ENCODE measurements at regions of chr18 and their contacts with region 1.

Region 1: DNA sequence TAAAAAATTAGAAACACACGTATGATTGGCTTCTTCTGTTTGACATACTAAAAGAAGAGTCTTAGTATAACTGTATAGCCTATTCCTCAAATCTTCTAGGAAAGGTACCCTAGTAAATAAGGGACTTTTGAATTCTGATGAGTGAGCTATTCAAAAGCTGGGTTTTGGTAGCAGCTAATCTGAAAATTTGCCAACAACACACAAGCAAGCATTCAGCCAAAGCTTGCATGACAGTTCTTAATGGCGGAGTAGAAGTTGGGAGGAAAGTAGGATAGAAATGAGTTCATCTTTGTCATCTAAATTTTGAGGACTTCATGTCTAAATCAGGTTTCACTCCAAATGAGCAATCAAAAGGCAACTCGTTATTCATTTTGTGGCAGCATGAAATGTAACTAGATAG is 813.0 kb downstream of the MBD2 start:
- DNase-seq: no peak
- ATAC-seq: no peak
- H3K4me3 ChIP-seq: no peak overlapping the region
- H3K27ac ChIP-seq: no peak overlapping the region
- H3K4me1 ChIP-seq: no peaks in the 10 kb centered on the region
- H3K27me3 ChIP-seq: no peaks in the 10 kb centered on the region
- CTCF ChIP-seq: no peak
- POLR2A ChIP-seq: no peak

Region 2: GRCh38 chr18:52903857-52904256 is 507.7 kb before region 1 on chr18:
- intact Hi-C with region 1: no loop called
- DNase-seq: no peak
- ATAC-seq: no peak
- H3K4me3 ChIP-seq: no peak overlapping the region
- H3K27ac ChIP-seq: no peak overlapping the region
- H3K4me1 ChIP-seq: no peaks in the 10 kb centered on the region
- H3K27me3 ChIP-seq: no peaks in the 10 kb centered on the region
- CTCF ChIP-seq: peak; percentile 10 to 59 (median 38)
- POLR2A ChIP-seq: no peak

Region 3: GRCh38 chr18:53360501-53361443 is 50.7 kb before region 1 on chr18:
- intact Hi-C with region 1: loop called in 1 of 10 experiments (anchors 5 kb)
- DNase-seq: no peak
- ATAC-seq: no peak
- H3K4me3 ChIP-seq: no peak overlapping the region
- H3K27ac ChIP-seq: no peak overlapping the region
- H3K4me1 ChIP-seq: no peaks in the 10 kb centered on the region
- H3K27me3 ChIP-seq: no peaks in the 10 kb centered on the region
- CTCF ChIP-seq: no peak
- POLR2A ChIP-seq: no peak